ENCODE measurements at regions of chr6 and their contacts with region 1.

Region 1: GRCh38 chr6:73732845-73733675 is 37.1 kb downstream of the CD109 start:
- DNase-seq: peak in 1 of 2 experiments; percentile 86
- H3K4me3 ChIP-seq: no peak overlapping the region
- H3K27ac ChIP-seq: no peak overlapping the region
- H3K4me1 ChIP-seq: no peaks in the 10 kb centered on the region
- H3K27me3 ChIP-seq: no peaks in the 10 kb centered on the region
- CTCF ChIP-seq: peak; percentile 83 to 97 (median 96)
- EP300 ChIP-seq: no peak
- POLR2A ChIP-seq: no peak
- RAD21 ChIP-seq: peak; percentile 69 to 80; a peak in 3 of 4 replicates

Region 2: DNA sequence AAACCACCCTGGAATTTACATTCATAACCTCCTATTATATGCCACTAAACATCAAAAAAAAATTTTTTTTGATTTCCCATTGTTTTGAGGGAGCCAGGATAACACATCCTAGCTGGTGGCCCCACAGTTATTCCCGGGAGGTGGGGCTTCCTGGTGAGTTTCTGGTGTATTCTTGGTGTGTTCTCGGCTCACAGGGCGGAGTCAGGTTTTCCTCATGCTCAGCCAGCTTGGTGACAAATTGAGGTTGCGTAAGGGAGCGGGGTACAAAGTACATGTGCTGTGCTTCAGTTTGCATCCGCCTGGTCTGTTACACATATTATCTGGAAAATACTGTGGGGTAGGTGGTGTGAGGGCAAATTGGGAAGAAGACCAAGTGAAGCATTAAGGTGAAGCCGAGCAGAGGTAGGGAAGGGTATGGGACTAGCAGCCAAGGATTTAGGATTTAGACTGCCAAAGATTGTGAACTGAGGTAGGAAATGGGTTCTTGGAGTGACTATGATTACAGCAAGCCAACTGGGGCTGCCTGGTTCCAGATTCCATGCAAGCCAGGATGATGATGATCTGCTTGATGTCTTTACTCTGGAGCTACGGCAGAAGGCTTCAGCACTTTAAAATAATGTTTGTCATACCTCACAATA is 166.0 kb before region 1 on chr6:
- CTCF ChIA-PET with region 1: no interaction called
- POLR2A ChIA-PET with region 1: no interaction called
- DNase-seq: no peak
- H3K4me3 ChIP-seq: no peak overlapping the region
- H3K27ac ChIP-seq: no peak overlapping the region
- H3K4me1 ChIP-seq: peaks cover 3 to 14% (median 10%) of the 10 kb centered on the region in 4 experiments; a peak in 5 of 7 replicates
- H3K27me3 ChIP-seq: no peaks in the 10 kb centered on the region
- CTCF ChIP-seq: no peak
- EP300 ChIP-seq: no peak
- POLR2A ChIP-seq: no peak
- RAD21 ChIP-seq: no peak

Region 3: GRCh38 chr6:73631849-73632248 is 101.2 kb before region 1 on chr6:
- CTCF ChIA-PET with region 1: no interaction called
- POLR2A ChIA-PET with region 1: no interaction called
- DNase-seq: no peak
- H3K4me3 ChIP-seq: no peak overlapping the region
- H3K27ac ChIP-seq: no peak overlapping the region
- H3K4me1 ChIP-seq: no peaks in the 10 kb centered on the region
- H3K27me3 ChIP-seq: no peaks in the 10 kb centered on the region
- CTCF ChIP-seq: no peak
- EP300 ChIP-seq: no peak
- POLR2A ChIP-seq: no peak
- RAD21 ChIP-seq: no peak

Region 4: GRCh38 chr6:73675466-73676098 is 57.5 kb before region 1 on chr6:
- CTCF ChIA-PET with region 1: interaction called, 89 read pairs
- POLR2A ChIA-PET with region 1: no interaction called
- DNase-seq: peak in 1 of 2 experiments; percentile 87
- H3K4me3 ChIP-seq: no peak overlapping the region
- H3K27ac ChIP-seq: no peak overlapping the region
- H3K4me1 ChIP-seq: no peaks in the 10 kb centered on the region
- H3K27me3 ChIP-seq: no peaks in the 10 kb centered on the region
- CTCF ChIP-seq: peak; percentile 75 to 96 (median 87)
- EP300 ChIP-seq: no peak
- POLR2A ChIP-seq: no peak
- RAD21 ChIP-seq: peak; percentile 83 to 89

Region 5: DNA sequence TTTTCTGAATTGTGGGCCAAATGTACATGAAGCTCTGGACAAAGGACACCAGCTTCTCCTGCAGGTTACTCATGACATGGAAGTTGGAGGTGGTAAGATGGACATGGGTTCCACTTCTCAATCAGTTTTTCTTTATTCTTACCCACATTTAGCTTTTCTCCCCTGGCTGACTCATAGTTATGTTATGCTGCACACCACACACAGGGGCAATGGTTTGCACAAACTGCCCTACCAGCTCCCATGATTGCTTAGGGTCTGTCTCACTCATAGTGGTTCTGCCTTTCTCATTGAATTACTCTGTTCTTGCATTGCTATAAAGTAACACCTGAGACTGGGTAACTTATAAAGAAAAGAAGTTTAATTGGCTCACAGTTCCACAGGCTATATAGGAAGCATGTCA is 41.5 kb before region 1 on chr6:
- CTCF ChIA-PET with region 1: interaction called, 20 read pairs
- POLR2A ChIA-PET with region 1: no interaction called
- DNase-seq: no peak
- H3K4me3 ChIP-seq: no peak overlapping the region
- H3K27ac ChIP-seq: no peak overlapping the region
- H3K4me1 ChIP-seq: peaks cover 0 to 3% (median 0%) of the 10 kb centered on the region in 4 experiments; a peak in 2 of 7 replicates
- H3K27me3 ChIP-seq: peaks cover 0 to 2% (median 0%) of the 10 kb centered on the region in 4 experiments; a peak in 3 of 7 replicates
- CTCF ChIP-seq: no peak
- EP300 ChIP-seq: no peak
- POLR2A ChIP-seq: no peak
- RAD21 ChIP-seq: no peak

Region 6: GRCh38 chr6:73704260-73704659 is 28.8 kb before region 1 on chr6:
- CTCF ChIA-PET with region 1: interaction called, 10 read pairs
- POLR2A ChIA-PET with region 1: no interaction called
- DNase-seq: no peak
- H3K4me3 ChIP-seq: no peak overlapping the region
- H3K27ac ChIP-seq: no peak overlapping the region
- H3K4me1 ChIP-seq: no peaks in the 10 kb centered on the region
- H3K27me3 ChIP-seq: no peaks in the 10 kb centered on the region
- CTCF ChIP-seq: no peak
- EP300 ChIP-seq: no peak
- POLR2A ChIP-seq: no peak
- RAD21 ChIP-seq: no peak

Region 7: DNA sequence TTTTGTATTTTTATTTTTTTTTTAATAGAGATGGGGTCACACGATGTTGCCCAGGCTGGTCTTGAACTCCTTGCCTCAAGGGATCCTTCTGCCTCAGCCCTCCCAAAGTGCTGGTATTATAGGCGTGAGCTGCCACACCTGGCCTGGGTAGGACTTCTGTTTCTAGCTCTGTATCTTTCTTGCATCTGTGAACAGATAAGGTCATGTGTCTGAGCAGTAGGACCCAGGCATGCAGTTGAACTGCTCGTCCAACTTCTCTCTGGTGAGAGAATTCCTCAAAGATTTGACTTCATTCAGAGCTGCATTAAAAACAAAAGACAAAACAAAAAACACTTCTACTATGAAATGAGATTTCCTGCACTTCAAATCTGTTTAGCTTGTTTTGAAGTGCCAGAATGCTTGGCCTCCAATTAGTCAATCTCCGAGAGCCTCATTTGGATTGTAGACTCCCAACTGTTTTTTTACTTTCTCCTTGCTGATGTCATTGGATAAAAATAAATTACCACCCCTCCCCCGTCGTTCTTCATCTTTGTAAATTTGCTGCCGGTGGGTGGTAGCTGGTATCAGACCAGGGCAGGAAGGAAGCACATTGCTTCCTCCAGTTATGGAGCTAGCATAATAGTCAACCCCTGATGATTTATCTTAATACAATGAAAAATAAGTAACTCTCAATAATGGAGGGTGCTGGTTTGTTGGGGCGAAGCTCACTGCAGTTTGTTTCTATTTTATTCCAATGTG is 19.5 kb before region 1 on chr6:
- CTCF ChIA-PET with region 1: interaction called, 16 read pairs
- POLR2A ChIA-PET with region 1: no interaction called
- DNase-seq: no peak
- H3K4me3 ChIP-seq: no peak overlapping the region
- H3K27ac ChIP-seq: no peak overlapping the region
- H3K4me1 ChIP-seq: peaks cover 0 to 4% (median 3%) of the 10 kb centered on the region in 4 experiments; a peak in 4 of 7 replicates
- H3K27me3 ChIP-seq: no peaks in the 10 kb centered on the region
- CTCF ChIP-seq: no peak
- EP300 ChIP-seq: no peak
- POLR2A ChIP-seq: no peak
- RAD21 ChIP-seq: no peak

Region 8: DNA sequence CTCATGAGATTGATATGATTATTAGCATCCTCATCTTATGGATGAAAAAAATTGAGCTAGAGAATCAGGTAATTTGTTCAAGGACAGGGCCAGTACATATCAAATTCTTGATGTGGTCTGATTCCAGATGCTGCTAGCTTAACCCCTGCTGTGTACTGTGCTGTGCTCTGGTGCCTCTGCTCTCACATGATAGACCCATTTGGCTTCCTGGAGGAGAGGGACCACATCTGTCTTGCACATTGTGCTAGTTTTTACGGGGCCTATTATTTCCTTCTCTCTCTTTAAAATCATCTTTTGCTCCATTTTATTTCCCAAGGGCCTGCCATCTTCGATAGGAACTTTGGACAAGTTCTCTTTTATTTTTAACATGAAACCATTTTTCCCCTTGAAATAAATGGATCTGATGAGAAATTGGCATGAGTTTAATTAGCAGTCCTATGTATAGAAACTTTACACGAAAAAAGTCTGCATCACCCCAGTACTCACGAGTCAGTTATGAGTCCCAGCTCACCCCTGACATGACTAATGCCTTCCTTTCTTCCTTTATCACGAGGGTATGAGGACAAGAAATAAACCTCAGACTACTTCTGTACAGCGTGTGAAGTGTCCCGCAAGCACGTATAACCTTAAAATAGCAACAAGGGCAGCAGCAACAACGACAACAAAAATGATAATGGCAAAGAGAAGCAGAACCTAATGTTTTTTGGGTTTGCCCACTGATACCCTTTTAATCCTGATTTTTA is 10.6 kb before region 1 on chr6:
- CTCF ChIA-PET with region 1: interaction called, 21 read pairs
- POLR2A ChIA-PET with region 1: no interaction called
- DNase-seq: no peak
- H3K4me3 ChIP-seq: no peak overlapping the region
- H3K27ac ChIP-seq: no peak overlapping the region
- H3K4me1 ChIP-seq: no peaks in the 10 kb centered on the region
- H3K27me3 ChIP-seq: no peaks in the 10 kb centered on the region
- CTCF ChIP-seq: no peak
- EP300 ChIP-seq: no peak
- POLR2A ChIP-seq: no peak
- RAD21 ChIP-seq: no peak

Region 9: DNA sequence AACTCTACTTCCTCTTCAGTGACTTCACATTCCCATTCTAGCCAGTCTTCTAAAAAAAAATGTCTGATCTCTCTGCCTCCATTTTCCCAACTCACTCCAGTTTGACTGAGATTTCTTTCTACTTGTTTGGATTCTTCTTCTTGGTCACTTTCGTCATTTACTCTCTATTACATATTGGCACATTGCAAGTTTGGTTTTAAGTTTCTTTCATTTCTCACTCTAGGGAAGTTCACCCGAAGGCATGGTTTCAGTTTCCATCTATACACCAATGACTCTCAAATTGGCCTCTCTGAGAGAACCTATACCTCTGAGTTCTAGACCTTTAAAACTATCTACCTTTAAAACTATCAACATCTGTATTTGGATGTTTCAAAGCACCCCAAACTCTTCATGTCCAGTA is 14.2 kb after region 1 on chr6:
- CTCF ChIA-PET with region 1: interaction called, 20 read pairs
- POLR2A ChIA-PET with region 1: interaction called, 3 read pairs
- DNase-seq: no peak
- H3K4me3 ChIP-seq: no peak overlapping the region
- H3K27ac ChIP-seq: no peak overlapping the region
- H3K4me1 ChIP-seq: no peaks in the 10 kb centered on the region
- H3K27me3 ChIP-seq: no peaks in the 10 kb centered on the region
- CTCF ChIP-seq: no peak
- EP300 ChIP-seq: no peak
- POLR2A ChIP-seq: no peak
- RAD21 ChIP-seq: no peak

Measured in H1 (cell line).